ENCODE measurements at regions of chr3 and their contacts with region 1.

Region 1: GRCh38 chr3:157618075-157618760 is 115.0 kb upstream of the VEPH1 start:
- DNase-seq: peak in 1 of 2 donors; percentile 56
- ATAC-seq: peak; percentile 68 to 85 (median 71)
- H3K4me3 ChIP-seq: no peak overlapping the region
- H3K4me3 Mint-ChIP-seq: no peak overlapping the region
- H3K27ac ChIP-seq: no peak overlapping the region
- H3K27ac Mint-ChIP-seq: no peak overlapping the region
- H3K4me1 ChIP-seq: no peaks in the 10 kb centered on the region
- H3K4me1 Mint-ChIP-seq: peaks cover 8% of the 10 kb centered on the region in 2 donors
- H3K27me3 ChIP-seq: no peaks in the 10 kb centered on the region
- H3K27me3 Mint-ChIP-seq: peaks cover 8 to 14% of the 10 kb centered on the region in 2 donors
- CTCF ChIP-seq: peak; percentile 67

Region 2: DNA sequence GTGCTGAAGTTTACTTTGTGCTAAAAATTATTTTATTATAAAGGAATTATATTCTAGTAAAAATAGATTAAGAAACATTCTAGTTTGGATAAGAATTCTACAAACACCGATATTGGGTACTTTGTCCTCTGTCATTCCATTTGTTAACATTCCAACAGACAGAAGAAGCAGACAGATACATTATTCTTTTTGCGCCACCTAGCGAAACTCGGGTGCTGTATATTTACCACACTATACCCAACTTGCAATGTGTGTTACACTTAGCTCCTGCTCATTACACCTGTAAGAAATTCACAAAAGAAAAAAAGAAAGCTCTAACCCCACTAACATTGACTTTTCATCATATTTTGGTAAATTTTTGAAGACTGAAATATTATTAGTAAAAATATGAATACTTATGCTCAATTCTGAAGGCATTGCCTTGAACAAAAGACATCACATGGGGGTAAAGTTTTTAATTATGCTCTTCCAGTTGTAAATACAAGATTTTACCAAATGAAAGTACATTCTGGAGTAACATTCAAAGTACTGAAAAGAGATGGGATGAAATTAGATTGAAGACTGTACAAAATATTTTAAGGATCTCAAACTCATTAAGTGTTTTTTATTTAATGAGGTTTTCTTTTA is 816.3 kb after region 1 on chr3:
- intact Hi-C with region 1: loop called (anchors 1 kb)
- DNase-seq: peak in 1 of 2 donors; percentile 59
- ATAC-seq: peak in 1 of 3 donors; percentile 52
- H3K4me3 ChIP-seq: no peak overlapping the region
- H3K4me3 Mint-ChIP-seq: no peak overlapping the region
- H3K27ac ChIP-seq: no peak overlapping the region
- H3K27ac Mint-ChIP-seq: no peak overlapping the region
- H3K4me1 ChIP-seq: no peaks in the 10 kb centered on the region
- H3K4me1 Mint-ChIP-seq: no peaks in the 10 kb centered on the region
- H3K27me3 ChIP-seq: no peaks in the 10 kb centered on the region
- H3K27me3 Mint-ChIP-seq: no peaks in the 10 kb centered on the region
- CTCF ChIP-seq: peak; percentile 58

Region 3: DNA sequence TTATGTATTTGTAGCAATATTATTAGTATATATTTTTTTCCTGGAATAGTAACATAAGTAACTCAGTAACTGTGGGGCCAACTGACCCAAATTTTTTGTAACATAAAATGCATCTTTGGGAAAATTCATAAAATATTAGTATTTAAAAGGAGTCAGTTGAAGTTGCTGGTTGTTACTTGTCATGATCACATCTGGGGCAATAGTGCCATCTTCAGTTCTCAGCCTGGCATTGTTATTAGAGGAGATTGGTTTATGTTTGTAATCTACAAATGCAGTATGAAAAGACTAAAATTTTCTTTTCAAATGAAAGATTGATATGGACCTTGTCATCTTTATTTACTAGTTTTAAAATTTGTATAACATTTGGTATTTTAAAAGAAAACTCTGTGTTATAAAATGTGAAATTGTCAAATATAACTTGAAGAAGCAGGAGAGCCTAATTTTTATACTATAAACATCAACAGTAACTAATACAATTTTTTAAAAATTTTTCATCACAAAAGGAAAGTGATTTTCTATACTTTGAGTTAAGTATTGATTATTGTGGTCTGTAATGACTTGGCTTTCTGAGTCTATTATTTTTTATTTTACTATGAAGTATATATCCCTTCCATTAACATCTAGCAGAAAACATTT is 914.0 kb after region 1 on chr3:
- intact Hi-C with region 1: loop called (anchors 5 kb)
- DNase-seq: peak in 1 of 2 donors; percentile 42
- ATAC-seq: no peak
- H3K4me3 ChIP-seq: no peak overlapping the region
- H3K4me3 Mint-ChIP-seq: no peak overlapping the region
- H3K27ac ChIP-seq: no peak overlapping the region
- H3K27ac Mint-ChIP-seq: no peak overlapping the region
- H3K4me1 ChIP-seq: no peaks in the 10 kb centered on the region
- H3K4me1 Mint-ChIP-seq: no peaks in the 10 kb centered on the region
- H3K27me3 ChIP-seq: no peaks in the 10 kb centered on the region
- H3K27me3 Mint-ChIP-seq: no peaks in the 10 kb centered on the region
- CTCF ChIP-seq: no peak